Activated naive CD4-positive, alpha-beta T cell treated with anti-CD3 and anti-CD28 coated beads for 36 hours (primary cell): ENCODE measurements at regions of chr6 and their contacts with region 1.

Region 1: DNA sequence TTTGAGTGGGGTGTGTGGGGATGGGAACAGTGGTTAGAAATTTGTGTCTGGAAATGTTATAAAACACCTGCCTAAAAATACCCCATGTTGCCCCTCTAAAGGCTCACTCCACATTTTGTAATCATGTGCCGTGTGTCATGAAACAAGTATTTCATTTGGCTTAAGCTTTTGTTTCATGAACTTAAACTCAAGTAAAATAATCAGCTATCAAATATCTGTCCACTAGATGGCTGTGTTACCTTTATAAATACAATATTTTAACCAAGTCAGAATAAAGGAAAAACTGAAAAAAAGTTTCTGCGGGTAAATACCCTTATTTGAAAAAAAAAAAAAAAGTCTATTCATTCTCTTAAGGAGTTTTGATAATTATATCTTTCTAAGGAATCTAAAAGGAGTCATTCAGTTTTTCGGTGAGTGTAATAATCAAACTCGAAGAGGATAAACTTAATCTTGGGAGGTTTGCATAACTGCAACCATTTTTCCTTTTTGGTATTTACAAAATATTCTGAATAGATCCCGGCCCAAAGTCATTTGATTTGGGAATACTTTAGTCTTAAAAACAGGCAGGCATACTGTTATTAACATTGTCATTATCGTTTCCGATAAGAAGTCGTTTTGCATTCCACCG is 29.9 kb upstream of the MTRF1L start:
- DNase-seq: no peak
- H3K4me3 Mint-ChIP-seq: no peak overlapping the region
- H3K27ac Mint-ChIP-seq: no peak overlapping the region
- H3K4me1 Mint-ChIP-seq: no peaks in the 10 kb centered on the region
- H3K27me3 Mint-ChIP-seq: peaks cover 7% of the 10 kb centered on the region

Region 2: GRCh38 chr6:153312641-153313040 is 280.3 kb after region 1 on chr6:
- CTCF ChIA-PET with region 1: no interaction called
- intact Hi-C with region 1: loop called (anchors 1 kb)
- DNase-seq: peak; percentile 54
- H3K4me3 Mint-ChIP-seq: no peak overlapping the region
- H3K27ac Mint-ChIP-seq: no peak overlapping the region
- H3K4me1 Mint-ChIP-seq: no peaks in the 10 kb centered on the region
- H3K27me3 Mint-ChIP-seq: no peaks in the 10 kb centered on the region

Region 3: DNA sequence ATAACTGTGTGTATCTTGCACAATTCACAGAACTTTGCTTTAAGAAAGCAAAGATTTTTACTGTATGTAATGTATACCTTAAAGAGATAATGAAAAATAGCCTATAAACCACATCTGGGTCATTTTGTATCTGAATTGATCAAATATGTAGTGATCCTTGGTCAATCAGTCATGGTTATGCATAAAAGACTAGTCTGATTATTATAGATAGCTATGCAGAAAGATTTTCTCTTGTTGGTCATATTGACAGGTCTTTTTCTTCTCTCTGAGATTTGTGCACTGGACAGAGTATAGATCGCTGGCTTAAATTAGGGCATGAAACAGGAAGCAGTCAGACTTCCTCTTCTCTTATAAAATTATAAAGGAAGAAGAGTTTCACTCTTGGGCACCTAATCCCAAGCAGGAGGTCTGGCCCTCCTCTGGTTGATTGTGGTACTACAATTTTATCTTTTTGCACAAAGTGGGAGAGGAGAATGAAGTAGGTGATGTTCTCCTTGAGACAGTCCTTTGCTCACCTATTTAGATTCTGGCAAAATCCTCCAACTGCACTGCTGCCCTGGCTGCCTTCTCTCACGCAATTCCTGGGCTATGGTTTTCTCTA is 479.6 kb after region 1 on chr6:
- CTCF ChIA-PET with region 1: no interaction called
- intact Hi-C with region 1: loop called (anchors 1 kb)
- DNase-seq: no peak
- H3K4me3 Mint-ChIP-seq: no peak overlapping the region
- H3K27ac Mint-ChIP-seq: no peak overlapping the region
- H3K4me1 Mint-ChIP-seq: no peaks in the 10 kb centered on the region
- H3K27me3 Mint-ChIP-seq: no peaks in the 10 kb centered on the region

Region 4: DNA sequence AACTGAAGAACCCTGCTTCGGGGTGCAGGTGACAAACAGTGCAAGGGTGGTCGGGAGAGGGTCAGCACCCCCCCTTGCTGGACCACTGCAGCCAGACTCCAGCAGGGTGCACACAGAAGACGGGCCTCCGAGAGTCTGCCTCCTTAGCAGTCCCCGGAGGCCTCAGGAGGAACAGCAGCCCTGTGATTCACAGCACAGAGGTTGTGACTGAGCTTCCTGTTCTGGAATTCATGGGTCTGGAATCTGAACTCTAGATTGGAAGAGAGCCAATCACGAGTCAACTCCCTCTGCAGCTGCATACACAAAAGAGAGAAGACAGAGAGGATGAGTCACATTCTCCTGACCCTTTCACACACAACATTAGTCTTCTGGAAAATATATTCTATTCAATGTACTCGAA is 757.7 kb after region 1 on chr6:
- CTCF ChIA-PET with region 1: no interaction called
- intact Hi-C with region 1: loop called (anchors 5 kb)
- DNase-seq: no peak
- H3K4me3 Mint-ChIP-seq: no peak overlapping the region
- H3K27ac Mint-ChIP-seq: no peak overlapping the region
- H3K4me1 Mint-ChIP-seq: no peaks in the 10 kb centered on the region
- H3K27me3 Mint-ChIP-seq: peaks cover 6% of the 10 kb centered on the region

Region 5: DNA sequence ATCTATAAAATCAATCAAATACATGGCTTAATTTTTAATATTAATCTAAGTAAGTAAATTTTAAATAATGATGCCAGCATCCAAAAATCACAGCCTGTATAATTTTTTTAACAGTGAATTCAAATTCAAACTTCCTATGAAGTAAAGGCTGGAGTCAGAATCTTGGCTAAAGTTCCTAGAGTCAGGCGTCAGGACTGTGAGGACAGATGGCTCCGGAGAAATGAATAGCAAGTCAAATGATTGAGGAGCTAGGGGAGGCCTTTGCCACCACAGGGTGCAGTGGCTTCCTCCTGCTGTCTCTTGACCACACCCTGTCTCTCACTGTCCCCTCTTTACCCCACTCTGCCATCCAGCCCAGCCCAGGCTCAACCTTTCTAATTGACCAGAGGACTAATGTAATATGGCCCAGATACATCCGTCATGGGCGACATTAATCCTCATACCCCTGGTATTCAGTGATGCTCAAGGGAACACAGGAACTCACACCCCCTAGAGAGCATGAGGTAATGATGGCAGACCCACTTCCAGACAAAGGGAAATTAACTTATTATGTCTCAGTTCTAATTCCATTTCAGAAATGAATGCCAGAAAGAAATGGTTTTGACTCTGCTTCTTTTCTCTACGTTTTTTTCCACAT is 1060.1 kb after region 1 on chr6:
- CTCF ChIA-PET with region 1: no interaction called
- intact Hi-C with region 1: no loop called
- DNase-seq: no peak
- H3K4me3 Mint-ChIP-seq: no peak overlapping the region
- H3K27ac Mint-ChIP-seq: no peak overlapping the region
- H3K4me1 Mint-ChIP-seq: no peaks in the 10 kb centered on the region
- H3K27me3 Mint-ChIP-seq: peaks cover 2% of the 10 kb centered on the region